Ascending aorta (tissue), 2 donors: ENCODE measurements at regions of chr5 and their contacts with region 1.

Region 1: GRCh38 chr5:71932655-71933338 is 174.5 kb upstream of the MAP1B start:
- DNase-seq: peak; percentile 79 to 94
- H3K4me3 ChIP-seq: no peak overlapping the region
- H3K27ac ChIP-seq: peak overlapping the region; percentile 94 to 96
- H3K4me1 ChIP-seq: peaks cover 10 to 15% of the 10 kb centered on the region in 2 donors
- H3K27me3 ChIP-seq: no peaks in the 10 kb centered on the region
- CTCF ChIP-seq: peak in 2 of 3 experiments; percentile 7 to 13

Region 2: DNA sequence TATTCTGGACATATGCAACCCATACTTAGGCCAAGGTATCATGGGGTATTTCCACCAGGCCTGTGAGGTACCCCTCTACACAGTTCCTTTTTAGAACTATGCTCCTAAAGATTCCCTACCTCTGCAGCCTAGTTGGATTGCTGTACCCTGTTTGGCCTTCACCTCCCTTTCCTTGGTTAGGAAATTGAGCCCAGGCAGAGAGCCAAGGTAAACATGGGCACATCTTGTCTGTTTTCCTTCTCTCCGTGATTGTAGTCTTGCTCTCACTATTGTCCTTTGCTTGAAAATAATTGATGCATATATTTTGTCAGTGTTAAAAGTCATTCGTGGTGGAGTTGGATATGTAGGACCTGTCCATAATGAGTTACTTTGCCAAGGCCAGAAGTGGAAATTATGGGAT is 450.7 kb before region 1 on chr5:
- intact Hi-C with region 1: no loop called
- DNase-seq: no peak
- H3K4me3 ChIP-seq: no peak overlapping the region
- H3K27ac ChIP-seq: no peak overlapping the region
- H3K4me1 ChIP-seq: peaks cover 0 to 4% of the 10 kb centered on the region in 2 donors
- H3K27me3 ChIP-seq: no peaks in the 10 kb centered on the region
- CTCF ChIP-seq: no peak

Region 3: DNA sequence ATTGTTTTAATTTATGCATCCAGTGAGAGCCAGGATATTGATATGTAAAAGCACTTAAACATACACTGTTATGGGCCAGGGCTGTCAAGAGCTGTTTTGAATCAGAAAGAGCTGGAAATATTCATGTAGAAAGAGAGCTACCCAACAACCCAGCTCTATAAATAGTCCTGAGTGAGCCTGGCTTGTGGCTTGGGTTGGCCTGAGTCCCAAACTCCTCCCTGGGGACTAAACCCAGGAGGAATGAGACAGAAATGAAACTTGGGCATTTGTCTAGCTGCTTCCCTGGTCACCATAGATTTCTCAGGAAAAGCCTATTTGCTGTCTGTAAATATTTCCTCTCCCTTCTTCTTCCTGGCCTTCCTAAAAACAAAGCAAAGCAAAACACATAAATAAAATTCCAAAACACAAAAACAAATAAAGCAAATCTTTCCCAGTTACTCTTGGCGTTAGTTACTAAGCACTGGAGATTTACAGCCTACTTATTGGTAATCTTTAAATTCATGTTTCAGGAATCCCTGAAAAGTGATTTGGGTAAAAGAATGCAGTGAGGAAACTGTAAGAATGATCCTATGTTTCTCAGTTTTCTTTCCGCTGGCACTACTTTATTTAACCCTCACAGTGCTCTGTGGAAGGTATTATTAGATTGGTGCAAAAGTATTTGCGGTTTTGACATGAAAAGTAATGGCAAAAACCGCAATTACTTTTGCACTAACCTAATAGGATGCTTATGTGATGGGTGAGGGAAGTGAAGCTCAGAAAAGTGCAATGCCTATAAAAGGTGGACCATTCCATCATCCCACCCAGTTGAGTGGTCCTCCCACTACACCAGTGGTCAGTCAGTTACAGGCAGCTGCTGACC is 101.9 kb before region 1 on chr5:
- intact Hi-C with region 1: loop called (anchors 2 kb)
- DNase-seq: peak; percentile 48 to 95
- H3K4me3 ChIP-seq: peak overlapping the region in 1 of 2 donors; percentile 34
- H3K27ac ChIP-seq: peak overlapping the region; percentile 75 to 92
- H3K4me1 ChIP-seq: peaks cover 6 to 22% of the 10 kb centered on the region in 2 donors
- H3K27me3 ChIP-seq: no peaks in the 10 kb centered on the region
- CTCF ChIP-seq: no peak

Region 4: DNA sequence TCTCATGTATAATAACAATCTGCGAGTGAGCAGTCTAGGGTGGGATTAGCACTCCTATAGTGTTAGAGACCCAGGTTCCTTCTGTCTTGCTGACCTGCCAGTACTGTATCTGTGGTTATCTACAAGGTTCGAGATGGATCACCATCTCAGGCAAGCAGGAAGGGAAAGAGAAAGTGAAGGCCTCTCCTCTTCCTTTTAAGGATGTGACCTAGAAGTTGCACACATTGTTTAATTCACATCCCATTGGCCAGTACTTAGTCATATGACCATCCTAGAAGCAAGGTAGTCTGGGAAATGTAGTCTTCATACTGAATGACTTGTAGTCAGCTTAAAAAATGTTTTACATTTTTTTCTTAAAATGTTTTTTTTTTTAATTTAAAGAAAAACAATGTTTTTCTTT is 45.1 kb before region 1 on chr5:
- intact Hi-C with region 1: loop called (anchors 2 kb)
- DNase-seq: no peak
- H3K4me3 ChIP-seq: no peak overlapping the region
- H3K27ac ChIP-seq: peak overlapping the region in 1 of 2 donors; percentile 27
- H3K4me1 ChIP-seq: peaks cover 3 to 10% of the 10 kb centered on the region in 2 donors
- H3K27me3 ChIP-seq: no peaks in the 10 kb centered on the region
- CTCF ChIP-seq: no peak

Region 5: DNA sequence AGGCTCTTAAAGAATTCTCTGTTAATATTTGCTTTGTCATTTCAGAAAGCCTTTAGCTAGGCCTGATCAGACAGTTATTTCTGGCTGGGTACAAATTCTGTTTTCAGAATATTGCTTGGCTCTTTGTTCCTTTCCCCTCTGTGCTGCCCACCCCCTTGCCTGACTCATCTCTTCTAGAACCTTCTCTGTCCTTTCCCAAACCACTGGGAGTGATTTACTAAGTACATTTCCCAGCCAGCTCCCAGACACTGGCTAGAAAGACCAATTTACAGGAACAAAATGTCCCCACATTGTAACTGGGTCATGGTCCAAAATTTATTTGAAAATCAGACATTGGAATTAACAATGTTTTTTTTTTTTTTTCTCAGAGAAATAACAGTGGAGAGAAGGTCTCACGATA is 41.4 kb after region 1 on chr5:
- intact Hi-C with region 1: loop called (anchors 2 kb)
- DNase-seq: peak in 1 of 2 donors; percentile 80
- H3K4me3 ChIP-seq: no peak overlapping the region
- H3K27ac ChIP-seq: peak overlapping the region; percentile 64 to 77
- H3K4me1 ChIP-seq: peaks cover 9 to 10% of the 10 kb centered on the region in 2 donors
- H3K27me3 ChIP-seq: no peaks in the 10 kb centered on the region
- CTCF ChIP-seq: no peak

Region 6: DNA sequence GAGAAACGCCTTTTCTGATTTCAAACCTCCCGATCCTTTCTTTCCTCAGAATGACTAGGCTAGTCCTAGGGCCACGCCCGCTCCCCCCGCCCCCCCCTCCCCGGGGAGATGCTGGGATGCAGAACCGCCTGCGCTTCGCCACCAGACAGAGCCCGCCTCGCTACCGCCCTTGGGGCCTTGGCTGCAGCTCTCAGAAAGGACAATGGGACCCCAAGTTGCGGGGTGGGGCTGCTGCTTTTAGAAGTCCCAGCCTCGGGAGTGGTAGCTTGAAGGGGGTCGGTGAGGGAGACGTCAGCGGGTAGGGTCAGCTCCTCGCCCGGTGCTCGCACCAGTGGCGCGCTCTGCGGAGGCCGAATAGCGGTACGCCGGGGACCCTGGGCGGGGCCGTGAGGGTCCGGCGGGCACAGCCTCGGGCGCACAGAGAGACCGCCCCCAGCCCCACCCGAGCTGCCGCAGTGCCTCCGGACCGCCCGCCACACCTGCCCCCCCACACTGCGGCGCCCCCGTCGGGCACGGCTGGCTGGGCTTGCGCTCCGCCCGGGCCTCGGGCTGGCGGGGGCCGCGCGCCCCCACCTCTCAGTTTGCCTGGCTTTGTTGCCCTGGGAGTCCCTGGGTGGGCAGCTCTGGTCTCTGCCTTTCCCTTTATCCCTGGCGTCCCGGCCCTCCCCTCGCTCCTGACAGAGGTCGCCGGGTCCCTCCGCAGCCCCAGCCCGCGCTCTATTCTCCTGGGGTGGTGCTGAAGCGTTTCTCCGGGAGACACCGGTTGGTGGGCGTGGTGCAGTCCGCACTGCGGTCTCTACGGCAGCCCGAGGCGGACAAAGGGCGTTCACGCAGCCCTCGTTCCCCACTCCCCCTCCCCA is 175.6 kb after region 1 on chr5:
- intact Hi-C with region 1: loop called (anchors 2 kb)
- DNase-seq: peak; percentile 56 to 93
- H3K4me3 ChIP-seq: peak overlapping the region; percentile 72 to 94
- H3K27ac ChIP-seq: peak overlapping the region; percentile 94 to 97
- H3K4me1 ChIP-seq: peaks cover 0 to 14% of the 10 kb centered on the region in 2 donors
- H3K27me3 ChIP-seq: no peaks in the 10 kb centered on the region
- CTCF ChIP-seq: no peak